Colonic mucosa (tissue), 4 donors: ENCODE measurements at regions of chr6 and their contacts with region 1.

Region 1: GRCh38 chr6:166402582-166403277 is 20.0 kb upstream of the MPC1 start:
- DNase-seq: no peak
- H3K4me3 ChIP-seq: no peak overlapping the region
- H3K27ac ChIP-seq: no peak overlapping the region
- H3K4me1 ChIP-seq: no peaks in the 10 kb centered on the region
- H3K27me3 ChIP-seq: no peaks in the 10 kb centered on the region
- CTCF ChIP-seq: no peak

Region 2: GRCh38 chr6:166244353-166245045 is 158.2 kb before region 1 on chr6:
- intact Hi-C with region 1: no loop called
- DNase-seq: no peak
- H3K4me3 ChIP-seq: no peak overlapping the region
- H3K27ac ChIP-seq: no peak overlapping the region
- H3K4me1 ChIP-seq: no peaks in the 10 kb centered on the region
- H3K27me3 ChIP-seq: no peaks in the 10 kb centered on the region
- CTCF ChIP-seq: no peak

Region 3: DNA sequence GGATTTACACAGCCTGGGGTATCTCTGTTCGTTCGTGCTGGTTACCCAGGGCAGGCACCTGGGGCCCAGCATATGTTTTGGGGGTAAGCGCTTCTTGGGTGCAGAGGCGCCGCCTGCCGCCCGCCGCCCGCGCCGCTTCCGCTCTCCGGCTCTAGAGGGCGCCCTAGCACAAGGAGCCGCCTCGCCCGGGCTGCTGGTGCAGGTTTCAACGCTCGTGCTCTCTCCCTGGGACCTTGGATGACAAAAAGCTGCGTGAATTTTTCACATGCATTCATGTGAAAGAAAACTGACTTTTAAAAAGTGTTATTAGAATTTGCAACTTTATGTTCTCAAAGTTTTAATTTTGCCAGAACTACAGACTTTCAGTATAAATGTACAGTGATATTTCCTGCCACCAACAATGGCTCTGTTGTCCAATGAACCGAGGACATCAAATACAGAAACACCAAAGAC is 127.0 kb before region 1 on chr6:
- intact Hi-C with region 1: loop called (anchors 2 kb)
- DNase-seq: peak; percentile 62
- H3K4me3 ChIP-seq: no peak overlapping the region
- H3K27ac ChIP-seq: no peak overlapping the region
- H3K4me1 ChIP-seq: no peaks in the 10 kb centered on the region
- H3K27me3 ChIP-seq: no peaks in the 10 kb centered on the region
- CTCF ChIP-seq: peak; percentile 98

Region 4: GRCh38 chr6:166313255-166314070 is 89.3 kb before region 1 on chr6:
- intact Hi-C with region 1: loop called (anchors 5 kb)
- DNase-seq: peak; percentile 38
- H3K4me3 ChIP-seq: no peak overlapping the region
- H3K27ac ChIP-seq: no peak overlapping the region
- H3K4me1 ChIP-seq: no peaks in the 10 kb centered on the region
- H3K27me3 ChIP-seq: peaks cover 11% of the 10 kb centered on the region
- CTCF ChIP-seq: peak; percentile 57